Colonic mucosa (tissue), 4 donors: ENCODE measurements at regions of chr7 and their contacts with region 1.

Region 1: DNA sequence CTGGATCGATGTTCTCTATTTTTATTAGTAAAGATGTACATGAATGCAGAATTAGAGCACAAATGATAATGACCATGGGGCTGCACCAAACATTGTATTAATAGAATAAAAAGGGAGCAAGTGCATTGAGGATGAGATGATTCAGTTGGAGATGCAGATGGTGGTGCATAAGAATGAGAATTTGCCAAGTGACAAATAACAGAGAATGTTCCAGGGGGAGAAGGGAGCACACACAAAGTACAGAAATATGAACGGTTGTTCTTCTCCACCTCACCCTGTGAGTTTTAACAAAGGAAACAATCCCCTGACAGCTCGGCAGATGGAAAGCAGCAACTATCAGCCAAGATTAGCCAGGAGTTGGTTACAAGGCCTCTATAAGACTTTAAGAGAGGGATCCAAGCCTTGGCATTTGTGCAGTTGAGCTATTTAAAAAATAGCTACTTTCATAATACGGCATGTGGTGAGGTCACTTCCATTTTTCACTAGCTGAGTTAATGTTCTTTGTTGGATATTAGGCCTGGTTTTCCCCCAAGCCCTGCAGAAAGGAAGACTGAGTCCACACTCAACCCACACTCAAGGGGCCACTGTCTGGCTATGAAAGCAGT is 462.5 kb downstream of the TNS3 start:
- DNase-seq: no peak
- H3K4me3 ChIP-seq: no peak overlapping the region
- H3K27ac ChIP-seq: no peak overlapping the region
- H3K4me1 ChIP-seq: no peaks in the 10 kb centered on the region
- H3K27me3 ChIP-seq: no peaks in the 10 kb centered on the region
- CTCF ChIP-seq: no peak

Region 2: DNA sequence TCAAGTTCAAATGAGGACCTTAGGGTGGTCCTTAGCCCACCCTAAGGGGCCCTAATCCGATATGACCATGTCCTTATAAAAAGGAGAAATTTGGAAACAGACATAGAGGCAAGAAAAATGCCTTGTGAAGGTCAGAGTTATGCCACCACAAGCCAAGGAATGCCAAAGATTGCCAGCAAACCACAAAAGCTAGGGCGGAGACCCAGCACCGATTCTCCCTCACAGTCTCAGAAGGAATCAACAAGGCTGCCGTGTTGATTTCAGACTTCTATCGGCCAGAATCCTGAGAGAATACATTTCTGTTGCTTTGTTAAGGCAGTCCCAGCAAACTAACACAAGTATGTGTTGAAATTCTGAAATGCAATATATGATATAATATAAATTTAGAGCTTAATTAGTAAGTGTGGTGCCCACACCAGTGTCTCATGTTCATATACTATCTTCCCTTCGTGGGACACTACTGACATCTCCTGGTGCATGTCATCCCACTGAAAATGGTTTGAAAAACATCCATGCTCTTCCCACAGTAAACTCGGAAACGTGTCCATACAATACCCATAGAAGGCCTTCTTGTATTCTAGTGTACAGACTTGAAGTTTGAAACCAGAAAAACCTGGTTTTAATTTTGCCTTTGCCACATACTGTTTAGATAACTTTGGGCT is 113.5 kb after region 1 on chr7:
- intact Hi-C with region 1: loop called (anchors 10 kb)
- DNase-seq: no peak
- H3K4me3 ChIP-seq: no peak overlapping the region
- H3K27ac ChIP-seq: no peak overlapping the region
- H3K4me1 ChIP-seq: no peaks in the 10 kb centered on the region
- H3K27me3 ChIP-seq: no peaks in the 10 kb centered on the region
- CTCF ChIP-seq: no peak

Region 3: GRCh38 chr7:47254081-47255006 is 135.0 kb after region 1 on chr7:
- intact Hi-C with region 1: no loop called
- DNase-seq: peak; percentile 73
- H3K4me3 ChIP-seq: peak overlapping the region; percentile 39
- H3K27ac ChIP-seq: peak overlapping the region; percentile 11
- H3K4me1 ChIP-seq: no peaks in the 10 kb centered on the region
- H3K27me3 ChIP-seq: no peaks in the 10 kb centered on the region
- CTCF ChIP-seq: peak; percentile 96